Mammary epithelial cell (primary cell): ENCODE measurements at regions of chr9 and their contacts with region 1.

Region 1: GRCh38 chr9:38127271-38127882 is 58.4 kb upstream of the SHB start:
- DNase-seq: no peak
- H3K4me3 ChIP-seq: no peak overlapping the region
- H3K27ac ChIP-seq: no peak overlapping the region
- H3K4me1 ChIP-seq: no peaks in the 10 kb centered on the region
- H3K27me3 ChIP-seq: no peaks in the 10 kb centered on the region
- CTCF ChIP-seq: no peak

Region 2: GRCh38 chr9:37650299-37650872 is 477.0 kb before region 1 on chr9:
- CTCF ChIA-PET with region 1: no interaction called
- dilution Hi-C with region 1: no loop called
- in situ Hi-C with region 1: no loop called
- intact Hi-C with region 1: no loop called
- DNase-seq: no peak
- H3K4me3 ChIP-seq: peak overlapping the region in 1 of 3 experiments; percentile 26
- H3K27ac ChIP-seq: no peak overlapping the region
- H3K4me1 ChIP-seq: peaks cover 10% of the 10 kb centered on the region
- H3K27me3 ChIP-seq: peaks cover 26% of the 10 kb centered on the region
- CTCF ChIP-seq: no peak

Region 3: DNA sequence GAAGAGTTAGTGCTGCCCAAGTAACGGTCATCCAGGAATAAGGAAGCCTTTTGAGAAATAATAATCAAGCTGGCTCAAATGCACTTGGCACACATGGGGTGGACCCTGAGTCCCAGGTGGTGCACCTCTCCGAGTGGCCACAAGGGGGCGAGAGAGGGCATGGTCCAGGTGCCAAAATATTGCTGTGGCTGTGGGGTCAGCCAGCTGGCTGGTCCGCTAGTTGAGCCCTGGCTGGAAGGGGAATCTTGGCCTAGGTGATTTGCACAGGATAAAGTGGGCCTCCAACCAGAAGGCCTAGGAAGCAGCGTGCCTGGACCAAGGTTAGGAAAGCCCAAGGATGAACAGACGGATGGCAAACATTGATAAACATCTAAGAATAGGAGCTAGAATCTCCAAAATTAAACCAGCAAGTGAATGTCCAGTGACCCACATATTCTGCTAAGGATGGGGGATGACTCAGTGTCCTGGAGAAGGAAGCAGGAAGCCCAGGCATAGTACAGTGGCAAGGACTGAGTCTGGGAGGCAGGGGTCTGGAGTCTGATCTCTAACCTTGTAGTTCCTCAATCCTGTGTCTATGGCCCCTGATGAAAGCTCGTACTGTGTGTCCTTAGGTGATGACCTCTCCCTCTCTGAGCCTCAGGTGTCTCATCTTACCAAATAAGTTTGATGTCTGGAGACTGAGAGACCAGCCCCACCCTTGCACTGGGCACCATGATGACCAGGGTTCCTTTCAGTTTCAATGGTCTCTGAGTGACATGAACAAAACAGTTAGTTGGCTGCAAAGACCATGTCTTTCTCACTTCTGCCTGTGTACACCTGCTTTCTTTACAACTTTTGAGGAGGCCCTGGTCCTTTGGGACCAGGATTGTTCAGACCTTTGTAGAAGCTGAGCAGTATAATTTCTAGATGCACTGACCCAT is 39.1 kb before region 1 on chr9:
- CTCF ChIA-PET with region 1: no interaction called
- dilution Hi-C with region 1: no loop called
- in situ Hi-C with region 1: no loop called
- intact Hi-C with region 1: loop called (anchors 5 kb)
- DNase-seq: peak; percentile 32
- H3K4me3 ChIP-seq: no peak overlapping the region
- H3K27ac ChIP-seq: no peak overlapping the region
- H3K4me1 ChIP-seq: peaks cover 1% of the 10 kb centered on the region
- H3K27me3 ChIP-seq: no peaks in the 10 kb centered on the region
- CTCF ChIP-seq: peak; percentile 93 to 98

Region 4: DNA sequence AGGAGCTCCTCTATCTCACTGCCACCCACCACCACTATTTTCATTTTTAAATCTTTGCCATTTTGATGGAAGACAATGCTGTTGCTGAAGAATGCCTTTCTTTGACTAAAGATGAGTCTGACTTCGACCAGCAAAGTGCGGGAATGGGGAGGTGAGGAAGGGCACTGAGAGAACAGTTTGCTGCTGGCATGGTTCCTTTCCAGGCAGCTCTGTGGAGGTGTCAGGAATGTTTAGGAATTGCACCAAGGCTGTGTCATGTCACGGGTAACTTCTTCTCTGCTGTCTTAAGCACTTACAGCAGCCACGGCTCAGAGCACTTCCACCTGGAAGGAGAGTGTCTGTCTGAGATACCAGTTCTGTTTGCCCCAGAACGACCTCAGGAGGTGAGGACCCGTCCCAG is 16.9 kb before region 1 on chr9:
- CTCF ChIA-PET with region 1: no interaction called
- dilution Hi-C with region 1: no loop called
- in situ Hi-C with region 1: no loop called
- intact Hi-C with region 1: loop called (anchors 1 kb)
- DNase-seq: no peak
- H3K4me3 ChIP-seq: no peak overlapping the region
- H3K27ac ChIP-seq: no peak overlapping the region
- H3K4me1 ChIP-seq: no peaks in the 10 kb centered on the region
- H3K27me3 ChIP-seq: peaks cover 3% of the 10 kb centered on the region
- CTCF ChIP-seq: no peak